ENCODE measurements at regions of chr19 and their contacts with region 1.

Region 1: DNA sequence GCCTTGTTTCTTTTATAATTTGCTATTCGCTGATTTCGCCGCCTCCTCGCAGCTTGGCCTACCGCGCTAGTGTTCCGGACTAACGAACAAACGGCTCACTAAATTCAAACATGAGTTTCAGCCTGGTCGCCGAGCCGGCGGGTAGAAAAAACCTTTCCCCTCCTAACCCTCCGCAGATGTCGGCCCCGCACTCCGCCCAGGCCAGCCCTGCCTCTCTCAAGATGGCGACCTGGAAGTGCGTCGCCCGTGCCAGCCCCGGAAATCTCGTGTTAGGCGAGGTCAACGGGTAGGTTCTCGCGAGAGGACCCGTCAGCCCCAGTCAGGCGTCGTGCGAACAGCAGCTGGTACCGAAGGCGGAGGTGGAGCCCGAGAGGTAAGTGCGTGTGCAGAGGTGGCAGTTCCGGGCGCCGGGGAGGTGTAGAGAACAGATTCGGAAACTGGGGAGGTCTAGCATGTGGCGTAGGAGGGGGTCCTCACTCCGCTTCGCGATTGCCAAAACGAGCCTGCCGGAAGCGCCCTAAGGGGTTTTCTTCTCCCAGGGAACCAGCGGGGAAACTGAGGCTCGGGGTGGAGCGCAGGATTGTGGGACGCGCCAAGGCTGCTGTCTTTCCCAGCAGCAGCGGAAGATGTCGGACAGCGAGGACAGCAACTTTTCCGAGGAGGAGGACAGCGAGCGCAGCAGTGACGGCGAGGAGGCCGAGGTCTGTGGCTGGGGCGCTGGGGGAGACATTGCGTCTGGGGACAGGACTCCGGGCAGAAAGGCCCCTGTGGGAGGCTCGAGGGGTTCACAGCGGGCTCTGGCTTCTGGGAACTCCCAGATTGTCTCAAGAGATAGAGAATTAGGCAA is at the start of gene SUPT5H:
- DNase-seq: peak; percentile 94 to 100 (median 97)
- ATAC-seq: peak; percentile 93
- H3K4me3 ChIP-seq: peak within 1 kb of the TSS; percentile 85 to 95
- H3K4me3 Mint-ChIP-seq: peak within 1 kb of the TSS; percentile 93
- H3K27ac ChIP-seq: peak within 1 kb of the TSS; percentile 94 to 95
- H3K27ac Mint-ChIP-seq: peak within 1 kb of the TSS; percentile 99
- H3K4me1 ChIP-seq: peaks cover 42% of the 10 kb centered on the region
- H3K4me1 Mint-ChIP-seq: peaks cover 54% of the 10 kb centered on the region
- H3K27me3 ChIP-seq: no peaks in the 10 kb centered on the region
- H3K27me3 Mint-ChIP-seq: no peaks in the 10 kb centered on the region
- CTCF ChIP-seq: no peak
- total RNA-seq, gene SUPT5H: 303 to 329 TPM

Region 2: DNA sequence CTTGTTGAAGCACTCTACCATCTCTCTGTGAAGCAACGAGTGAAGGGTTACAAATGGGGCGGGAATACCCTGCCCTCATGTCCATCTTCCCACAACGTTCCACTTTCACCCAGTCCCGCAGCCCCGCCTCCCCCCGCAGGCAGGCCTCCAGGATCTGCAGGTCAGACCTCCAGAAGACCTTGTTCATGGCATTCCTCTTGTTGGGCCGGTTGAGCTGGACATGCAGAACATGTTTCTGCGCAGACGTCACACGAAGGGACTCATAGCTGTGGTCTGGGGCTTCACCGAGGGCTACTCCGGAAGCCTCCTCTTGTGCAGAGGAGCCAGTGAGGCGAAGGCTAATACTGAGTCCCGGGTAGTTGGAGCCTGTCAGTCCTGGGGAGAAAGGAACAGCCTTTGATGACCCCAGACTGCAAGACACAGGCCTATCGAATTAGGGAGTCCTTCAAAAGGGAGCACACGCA is 614.3 kb before region 1 on chr19:
- CTCF ChIA-PET with region 1: no interaction called
- POLR2A ChIA-PET with region 1: no interaction called
- intact Hi-C with region 1: loop called in 1 of 2 experiments (anchors 5 kb)
- DNase-seq: peak in 1 of 9 experiments; percentile 63
- ATAC-seq: no peak
- H3K4me3 ChIP-seq: peak overlapping the region; percentile 74
- H3K4me3 Mint-ChIP-seq: peak overlapping the region; percentile 90
- H3K27ac ChIP-seq: peak overlapping the region; percentile 66 to 85
- H3K27ac Mint-ChIP-seq: peak overlapping the region; percentile 89
- H3K4me1 ChIP-seq: peaks cover 21% of the 10 kb centered on the region
- H3K4me1 Mint-ChIP-seq: peaks cover 37% of the 10 kb centered on the region
- H3K27me3 ChIP-seq: no peaks in the 10 kb centered on the region
- H3K27me3 Mint-ChIP-seq: no peaks in the 10 kb centered on the region
- CTCF ChIP-seq: no peak

Region 3: DNA sequence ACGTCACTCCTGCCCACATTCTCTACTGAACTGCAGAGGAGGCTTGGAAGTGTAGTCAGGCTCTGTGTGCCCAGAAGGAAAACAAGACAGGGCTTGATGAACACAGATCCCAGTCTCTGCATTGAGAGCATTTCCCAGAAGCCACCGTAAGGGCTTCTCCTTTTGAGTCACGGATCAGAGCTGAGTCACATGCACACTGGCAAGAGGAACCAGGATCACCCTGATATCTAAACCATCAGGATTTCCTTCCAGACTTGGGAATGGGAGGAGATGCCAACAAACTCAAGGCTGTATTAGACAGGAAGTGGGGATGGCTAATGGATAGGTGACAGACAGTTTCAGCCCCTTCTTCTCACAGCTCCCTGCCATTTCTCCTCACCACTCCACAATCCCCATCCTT is 452.2 kb before region 1 on chr19:
- CTCF ChIA-PET with region 1: no interaction called
- POLR2A ChIA-PET with region 1: no interaction called
- intact Hi-C with region 1: no loop called
- DNase-seq: no peak
- ATAC-seq: no peak
- H3K4me3 ChIP-seq: no peak overlapping the region
- H3K4me3 Mint-ChIP-seq: no peak overlapping the region
- H3K27ac ChIP-seq: no peak overlapping the region
- H3K27ac Mint-ChIP-seq: no peak overlapping the region
- H3K4me1 ChIP-seq: no peaks in the 10 kb centered on the region
- H3K4me1 Mint-ChIP-seq: no peaks in the 10 kb centered on the region
- H3K27me3 ChIP-seq: peaks cover 0 to 2% of the 10 kb centered on the region in 2 experiments
- H3K27me3 Mint-ChIP-seq: peaks cover 37% of the 10 kb centered on the region
- CTCF ChIP-seq: no peak

Region 4: GRCh38 chr19:39397360-39398296 is 47.9 kb before region 1 on chr19:
- CTCF ChIA-PET with region 1: interaction called, 4 read pairs
- POLR2A ChIA-PET with region 1: interaction called, 13 read pairs
- intact Hi-C with region 1: no loop called
- DNase-seq: peak; percentile 88 to 98 (median 94)
- ATAC-seq: peak; percentile 41
- H3K4me3 ChIP-seq: peak overlapping the region; percentile 12 to 18
- H3K4me3 Mint-ChIP-seq: peak overlapping the region; percentile 71
- H3K27ac ChIP-seq: peak overlapping the region; percentile 33 to 92
- H3K27ac Mint-ChIP-seq: peak overlapping the region; percentile 96
- H3K4me1 ChIP-seq: peaks cover 51% of the 10 kb centered on the region
- H3K4me1 Mint-ChIP-seq: peaks cover 56% of the 10 kb centered on the region
- H3K27me3 ChIP-seq: no peaks in the 10 kb centered on the region
- H3K27me3 Mint-ChIP-seq: no peaks in the 10 kb centered on the region
- CTCF ChIP-seq: peak; percentile 94

Region 5: GRCh38 chr19:39480337-39481228 is 35.1 kb after region 1 on chr19 and contains the start of gene TIMM50:
- CTCF ChIA-PET with region 1: no interaction called
- POLR2A ChIA-PET with region 1: interaction called, 3 read pairs
- intact Hi-C with region 1: loop called (anchors 1 kb)
- DNase-seq: peak; percentile 94 to 98 (median 97)
- ATAC-seq: peak; percentile 98
- H3K4me3 ChIP-seq: peak within 1 kb of the TSS; percentile 85 to 98
- H3K4me3 Mint-ChIP-seq: peak within 1 kb of the TSS; percentile 91
- H3K27ac ChIP-seq: peak within 1 kb of the TSS; percentile 82
- H3K27ac Mint-ChIP-seq: peak within 1 kb of the TSS; percentile 90
- H3K4me1 ChIP-seq: peaks cover 15% of the 10 kb centered on the region
- H3K4me1 Mint-ChIP-seq: peaks cover 27% of the 10 kb centered on the region
- H3K27me3 ChIP-seq: no peaks in the 10 kb centered on the region
- H3K27me3 Mint-ChIP-seq: no peaks in the 10 kb centered on the region
- CTCF ChIP-seq: no peak
- total RNA-seq, gene TIMM50: 48.6 to 56.7 TPM

Region 6: GRCh38 chr19:39539519-39540332 is 94.2 kb after region 1 on chr19 and contains the start of gene EID2:
- CTCF ChIA-PET with region 1: interaction called, 26 read pairs
- POLR2A ChIA-PET with region 1: no interaction called
- intact Hi-C with region 1: loop called in 1 of 2 experiments (anchors 1 kb)
- DNase-seq: peak; percentile 84 to 97 (median 95)
- ATAC-seq: peak; percentile 91
- H3K4me3 ChIP-seq: peak within 1 kb of the TSS; percentile 81 to 95
- H3K4me3 Mint-ChIP-seq: peak within 1 kb of the TSS; percentile 97
- H3K27ac ChIP-seq: peak within 1 kb of the TSS; percentile 90 to 93
- H3K27ac Mint-ChIP-seq: peak within 1 kb of the TSS; percentile 98
- H3K4me1 ChIP-seq: peaks cover 31% of the 10 kb centered on the region
- H3K4me1 Mint-ChIP-seq: peaks cover 58% of the 10 kb centered on the region
- H3K27me3 ChIP-seq: no peaks in the 10 kb centered on the region
- H3K27me3 Mint-ChIP-seq: no peaks in the 10 kb centered on the region
- CTCF ChIP-seq: peak; percentile 74
- total RNA-seq, gene EID2: 16.3 to 17.7 TPM

Region 7: GRCh38 chr19:39833464-39834286 is 388.2 kb after region 1 on chr19 and contains the start of gene DYRK1B:
- CTCF ChIA-PET with region 1: no interaction called
- POLR2A ChIA-PET with region 1: no interaction called
- intact Hi-C with region 1: loop called in 1 of 2 experiments (anchors 10 kb)
- DNase-seq: peak; percentile 97 to 99 (median 98)
- ATAC-seq: peak; percentile 84
- H3K4me3 ChIP-seq: peak within 1 kb of the TSS; percentile 93 to 99
- H3K4me3 Mint-ChIP-seq: peak within 1 kb of the TSS; percentile 75
- H3K27ac ChIP-seq: peak within 1 kb of the TSS; percentile 96 to 99
- H3K27ac Mint-ChIP-seq: peak within 1 kb of the TSS; percentile 90
- H3K4me1 ChIP-seq: peaks cover 23% of the 10 kb centered on the region
- H3K4me1 Mint-ChIP-seq: peaks cover 28% of the 10 kb centered on the region
- H3K27me3 ChIP-seq: no peaks in the 10 kb centered on the region
- H3K27me3 Mint-ChIP-seq: no peaks in the 10 kb centered on the region
- CTCF ChIP-seq: no peak
- total RNA-seq, gene DYRK1B: 19.0 to 22.6 TPM

Measured in CD8-positive, alpha-beta T cell (primary cell).